HEK293 (cell line): ENCODE measurements at regions of chr18 and their contacts with region 1.

Region 1: DNA sequence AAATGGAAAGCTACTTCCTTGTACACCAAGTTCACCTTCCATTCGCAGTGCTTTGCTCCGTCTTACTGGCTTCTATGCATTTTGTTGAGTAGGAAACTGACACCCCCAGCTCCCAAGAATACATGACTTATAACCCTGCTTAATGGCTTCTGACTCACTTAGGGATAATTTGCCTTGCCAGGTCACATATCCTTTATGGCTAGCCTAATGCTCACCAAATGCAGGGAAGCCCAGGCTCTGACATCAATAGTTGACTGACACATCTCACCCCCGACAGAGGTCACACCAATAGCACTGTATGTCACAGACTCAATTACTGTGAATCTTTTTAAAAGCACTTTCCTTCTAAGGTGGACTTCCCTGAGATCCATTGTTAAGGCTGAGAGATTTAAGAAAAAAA is 147.2 kb downstream of the DTNA start:
- H3K4me3 ChIP-seq: no peak overlapping the region
- H3K27ac ChIP-seq: no peak overlapping the region
- H3K4me1 ChIP-seq: no peaks in the 10 kb centered on the region
- CTCF ChIP-seq: no peak

Region 2: GRCh38 chr18:34509879-34510586 is 347.3 kb before region 1 on chr18:
- CTCF ChIA-PET with region 1: no interaction called
- POLR2A ChIA-PET with region 1: no interaction called
- H3K4me3 ChIP-seq: no peak overlapping the region
- H3K27ac ChIP-seq: no peak overlapping the region
- H3K4me1 ChIP-seq: no peaks in the 10 kb centered on the region
- CTCF ChIP-seq: no peak

Region 3: DNA sequence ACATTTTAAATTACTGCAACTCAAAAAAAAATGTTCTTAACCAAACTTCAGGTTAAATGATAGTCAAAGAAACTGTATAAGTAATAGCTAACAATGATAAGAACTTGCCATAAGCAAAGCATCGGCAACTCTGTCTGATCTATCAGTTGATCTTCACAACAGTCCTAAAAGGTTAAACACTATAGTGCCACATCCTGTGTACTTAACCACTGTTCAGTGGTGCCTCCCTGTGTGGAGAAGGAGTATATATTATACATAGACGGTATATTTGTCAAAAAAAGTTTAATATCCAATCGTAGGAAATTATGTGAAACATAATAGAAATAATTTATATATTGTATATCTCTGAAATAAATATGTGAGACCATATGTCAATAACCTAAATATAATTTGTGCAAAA is 134.2 kb before region 1 on chr18:
- CTCF ChIA-PET with region 1: no interaction called
- POLR2A ChIA-PET with region 1: no interaction called
- H3K4me3 ChIP-seq: no peak overlapping the region
- H3K27ac ChIP-seq: no peak overlapping the region
- H3K4me1 ChIP-seq: no peaks in the 10 kb centered on the region
- CTCF ChIP-seq: no peak

Region 4: DNA sequence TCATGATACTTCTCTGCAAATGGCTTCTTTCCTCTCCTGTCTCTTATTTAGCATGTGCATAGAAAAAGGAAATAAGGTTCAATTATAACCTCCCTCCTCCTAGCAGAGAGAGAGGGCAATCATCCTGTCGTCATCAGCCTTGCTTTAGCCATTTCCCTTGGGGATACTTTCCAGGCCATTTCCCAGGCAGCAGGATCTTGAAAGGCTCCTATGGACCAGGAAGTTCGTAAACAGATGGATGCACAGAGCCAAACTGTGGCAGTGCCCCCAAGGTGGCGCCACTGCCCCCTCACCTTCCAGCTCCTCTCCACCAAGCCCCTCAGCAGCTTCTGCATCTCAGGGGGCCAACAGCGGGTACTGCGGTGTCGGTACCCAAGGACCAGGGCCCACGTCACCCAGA is 10.2 kb after region 1 on chr18:
- CTCF ChIA-PET with region 1: interaction called, 11 read pairs
- POLR2A ChIA-PET with region 1: no interaction called
- H3K4me3 ChIP-seq: no peak overlapping the region
- H3K27ac ChIP-seq: no peak overlapping the region
- H3K4me1 ChIP-seq: no peaks in the 10 kb centered on the region
- CTCF ChIP-seq: peak; percentile 62